ENCODE measurements at regions of chr16 and their contacts with region 1.

Region 1: GRCh38 chr16:28140788-28141618 is 70.8 kb downstream of the XPO6 start:
- DNase-seq: peak; percentile 47 to 96 (median 65)
- ATAC-seq: peak; percentile 75
- H3K4me3 ChIP-seq: peak overlapping the region; percentile 44
- H3K4me3 Mint-ChIP-seq: peak overlapping the region; percentile 65
- H3K27ac ChIP-seq: peak overlapping the region; percentile 80 to 81
- H3K27ac Mint-ChIP-seq: peak overlapping the region; percentile 97
- H3K4me1 ChIP-seq: peaks cover 84% of the 10 kb centered on the region
- H3K4me1 Mint-ChIP-seq: peaks cover 89% of the 10 kb centered on the region
- H3K27me3 ChIP-seq: no peaks in the 10 kb centered on the region
- H3K27me3 Mint-ChIP-seq: no peaks in the 10 kb centered on the region
- CTCF ChIP-seq: peak; percentile 39

Region 2: DNA sequence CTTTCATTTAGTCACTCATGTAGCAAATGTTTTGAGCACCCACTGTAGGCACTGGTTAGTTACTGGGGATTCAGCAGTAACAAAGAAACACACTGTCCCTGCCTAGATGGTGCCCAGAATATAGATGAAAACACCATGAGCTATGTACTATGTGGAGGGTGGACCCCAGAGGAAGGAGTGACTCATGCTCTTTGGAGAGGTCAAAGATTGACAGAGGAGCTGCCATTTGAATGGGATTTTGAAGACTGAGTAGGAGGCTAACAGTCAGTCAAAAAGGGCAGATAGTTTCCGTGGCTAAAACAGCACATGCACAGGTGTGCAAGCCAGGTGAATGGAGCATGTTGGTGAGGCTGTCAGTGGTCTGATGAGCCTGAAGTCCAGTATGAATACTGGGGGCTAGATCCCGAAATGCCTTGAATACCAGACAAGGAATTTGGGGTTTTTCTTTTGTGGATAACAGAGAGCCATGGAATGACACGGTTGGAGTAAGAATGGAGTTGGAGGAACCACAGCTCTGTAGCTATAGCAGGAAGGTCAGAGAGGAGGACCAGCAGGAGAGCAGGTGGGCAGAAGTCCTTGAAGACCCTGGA is 732.9 kb before region 1 on chr16:
- CTCF ChIA-PET with region 1: no interaction called
- POLR2A ChIA-PET with region 1: no interaction called
- intact Hi-C with region 1: no loop called
- DNase-seq: peak in 6 of 14 experiments; percentile 20 to 57 (median 50)
- ATAC-seq: peak; percentile 24
- H3K4me3 ChIP-seq: peak overlapping the region; percentile 2
- H3K4me3 Mint-ChIP-seq: peak overlapping the region; percentile 72
- H3K27ac ChIP-seq: peak overlapping the region; percentile 9 to 39
- H3K27ac Mint-ChIP-seq: peak overlapping the region; percentile 90
- H3K4me1 ChIP-seq: peaks cover 56% of the 10 kb centered on the region
- H3K4me1 Mint-ChIP-seq: peaks cover 96% of the 10 kb centered on the region
- H3K27me3 ChIP-seq: no peaks in the 10 kb centered on the region
- H3K27me3 Mint-ChIP-seq: no peaks in the 10 kb centered on the region
- CTCF ChIP-seq: no peak

Region 3: DNA sequence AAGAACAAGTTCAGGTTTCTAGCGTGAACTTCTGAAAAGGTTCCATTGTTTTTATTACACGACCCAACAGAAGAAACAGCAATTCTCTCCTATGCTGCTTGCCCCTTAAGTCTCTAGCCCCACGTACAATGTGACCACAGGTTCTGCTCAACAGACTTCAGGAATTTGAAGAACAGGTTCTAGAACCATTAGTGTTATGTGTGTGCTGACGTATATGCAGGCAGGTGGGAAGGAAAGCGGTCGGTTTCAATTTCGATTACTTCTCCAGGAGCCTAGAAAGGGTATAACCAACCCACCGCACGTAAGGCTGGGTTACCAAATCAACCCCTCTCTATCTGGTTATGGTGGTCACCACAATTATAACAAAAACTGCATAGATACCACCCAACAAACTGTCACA is 31.3 kb after region 1 on chr16:
- CTCF ChIA-PET with region 1: interaction called, 15 read pairs
- POLR2A ChIA-PET with region 1: interaction called, 25 read pairs
- intact Hi-C with region 1: loop called in 1 of 2 experiments (anchors 1 kb)
- DNase-seq: peak in 1 of 14 experiments; percentile 32
- ATAC-seq: no peak
- H3K4me3 ChIP-seq: no peak overlapping the region
- H3K4me3 Mint-ChIP-seq: no peak overlapping the region
- H3K27ac ChIP-seq: no peak overlapping the region
- H3K27ac Mint-ChIP-seq: peak overlapping the region; percentile 78
- H3K4me1 ChIP-seq: peaks cover 44% of the 10 kb centered on the region
- H3K4me1 Mint-ChIP-seq: peaks cover 83% of the 10 kb centered on the region
- H3K27me3 ChIP-seq: no peaks in the 10 kb centered on the region
- H3K27me3 Mint-ChIP-seq: no peaks in the 10 kb centered on the region
- CTCF ChIP-seq: no peak

Region 4: GRCh38 chr16:28193530-28194423 is 52.8 kb after region 1 on chr16:
- CTCF ChIA-PET with region 1: interaction called, 19 read pairs
- POLR2A ChIA-PET with region 1: interaction called, 46 read pairs
- intact Hi-C with region 1: loop called in 1 of 2 experiments (anchors 2 kb)
- DNase-seq: peak in 8 of 14 experiments; percentile 15 to 73 (median 27)
- ATAC-seq: peak; percentile 13
- H3K4me3 ChIP-seq: peak overlapping the region; percentile 36
- H3K4me3 Mint-ChIP-seq: peak overlapping the region; percentile 74
- H3K27ac ChIP-seq: peak overlapping the region; percentile 88 to 89
- H3K27ac Mint-ChIP-seq: peak overlapping the region; percentile 93
- H3K4me1 ChIP-seq: peaks cover 78% of the 10 kb centered on the region
- H3K4me1 Mint-ChIP-seq: peaks cover 86% of the 10 kb centered on the region
- H3K27me3 ChIP-seq: no peaks in the 10 kb centered on the region
- H3K27me3 Mint-ChIP-seq: no peaks in the 10 kb centered on the region
- CTCF ChIP-seq: no peak

Region 5: GRCh38 chr16:28218104-28218503 is 77.1 kb after region 1 on chr16:
- CTCF ChIA-PET with region 1: interaction called, 57 read pairs
- POLR2A ChIA-PET with region 1: interaction called, 105 read pairs
- intact Hi-C with region 1: loop called (anchors 1 kb)
- DNase-seq: peak; percentile 48 to 90 (median 60)
- ATAC-seq: peak; percentile 100
- H3K4me3 ChIP-seq: no peak overlapping the region
- H3K4me3 Mint-ChIP-seq: peak overlapping the region; percentile 51
- H3K27ac ChIP-seq: no peak overlapping the region
- H3K27ac Mint-ChIP-seq: peak overlapping the region; percentile 64
- H3K4me1 ChIP-seq: peaks cover 6% of the 10 kb centered on the region
- H3K4me1 Mint-ChIP-seq: peaks cover 6% of the 10 kb centered on the region
- H3K27me3 ChIP-seq: no peaks in the 10 kb centered on the region
- H3K27me3 Mint-ChIP-seq: no peaks in the 10 kb centered on the region
- CTCF ChIP-seq: peak; percentile 70

Region 6: GRCh38 chr16:28317040-28317880 is 176.3 kb after region 1 on chr16:
- CTCF ChIA-PET with region 1: no interaction called
- POLR2A ChIA-PET with region 1: no interaction called
- intact Hi-C with region 1: loop called (anchors 2 to 5 kb)
- DNase-seq: peak; percentile 61 to 86 (median 70)
- ATAC-seq: peak; percentile 75
- H3K4me3 ChIP-seq: no peak overlapping the region
- H3K4me3 Mint-ChIP-seq: peak overlapping the region; percentile 38
- H3K27ac ChIP-seq: no peak overlapping the region
- H3K27ac Mint-ChIP-seq: peak overlapping the region; percentile 78
- H3K4me1 ChIP-seq: peaks cover 50% of the 10 kb centered on the region
- H3K4me1 Mint-ChIP-seq: peaks cover 28% of the 10 kb centered on the region
- H3K27me3 ChIP-seq: no peaks in the 10 kb centered on the region
- H3K27me3 Mint-ChIP-seq: no peaks in the 10 kb centered on the region
- CTCF ChIP-seq: peak; percentile 95

Region 7: GRCh38 chr16:29757950-29758466 is 1617.0 kb after region 1 on chr16:
- CTCF ChIA-PET with region 1: no interaction called
- POLR2A ChIA-PET with region 1: no interaction called
- intact Hi-C with region 1: no loop called
- DNase-seq: no peak
- ATAC-seq: no peak
- H3K4me3 ChIP-seq: no peak overlapping the region
- H3K4me3 Mint-ChIP-seq: no peak overlapping the region
- H3K27ac ChIP-seq: no peak overlapping the region
- H3K27ac Mint-ChIP-seq: peak overlapping the region; percentile 80
- H3K4me1 ChIP-seq: peaks cover 49% of the 10 kb centered on the region
- H3K4me1 Mint-ChIP-seq: peaks cover 47% of the 10 kb centered on the region
- H3K27me3 ChIP-seq: no peaks in the 10 kb centered on the region
- H3K27me3 Mint-ChIP-seq: no peaks in the 10 kb centered on the region
- CTCF ChIP-seq: no peak

Measured in CD4-positive, alpha-beta T cell (primary cell).